ENCODE measurements at regions of chr2 and their contacts with region 1.

Region 1: GRCh38 chr2:16608661-16609643 is 56.7 kb downstream of the CYRIA start:
- DNase-seq: peak; percentile 86 to 88
- ATAC-seq: peak; percentile 96
- H3K4me3 ChIP-seq: peak overlapping the region; percentile 33
- H3K4me3 Mint-ChIP-seq: peak overlapping the region; percentile 89
- H3K27ac ChIP-seq: no peak overlapping the region
- H3K27ac Mint-ChIP-seq: peak overlapping the region; percentile 3 to 63
- H3K4me1 ChIP-seq: peaks cover 5% of the 10 kb centered on the region
- H3K4me1 Mint-ChIP-seq: peaks cover 32 to 51% of the 10 kb centered on the region in 2 donors
- H3K27me3 ChIP-seq: no peaks in the 10 kb centered on the region
- H3K27me3 Mint-ChIP-seq: no peaks in the 10 kb centered on the region
- CTCF ChIP-seq: peak; percentile 96

Region 2: GRCh38 chr2:15939854-15940660 is 668.9 kb before region 1 on chr2 and contains the start of gene MYCN:
- intact Hi-C with region 1: loop called (anchors 2 kb)
- DNase-seq: peak in 1 of 2 donors; percentile 65
- ATAC-seq: peak in 1 of 3 donors; percentile 18
- H3K4me3 ChIP-seq: no peak within 1 kb of the TSS
- H3K4me3 Mint-ChIP-seq: peak within 1 kb of the TSS; percentile 68
- H3K27ac ChIP-seq: no peak within 1 kb of the TSS
- H3K27ac Mint-ChIP-seq: no peak within 1 kb of the TSS
- H3K4me1 ChIP-seq: peaks cover 32% of the 10 kb centered on the region
- H3K4me1 Mint-ChIP-seq: peaks cover 7% of the 10 kb centered on the region in 2 donors
- H3K27me3 ChIP-seq: peaks cover 33% of the 10 kb centered on the region
- H3K27me3 Mint-ChIP-seq: peaks cover 49 to 62% of the 10 kb centered on the region in 2 donors
- CTCF ChIP-seq: no peak
- total RNA-seq, gene MYCN: 0.18 TPM in 1 of 3 donors, not detected in the others

Region 3: GRCh38 chr2:16487686-16488085 is 121.3 kb before region 1 on chr2:
- intact Hi-C with region 1: no loop called
- DNase-seq: no peak
- ATAC-seq: no peak
- H3K4me3 ChIP-seq: no peak overlapping the region
- H3K4me3 Mint-ChIP-seq: no peak overlapping the region
- H3K27ac ChIP-seq: no peak overlapping the region
- H3K27ac Mint-ChIP-seq: no peak overlapping the region
- H3K4me1 ChIP-seq: no peaks in the 10 kb centered on the region
- H3K4me1 Mint-ChIP-seq: no peaks in the 10 kb centered on the region
- H3K27me3 ChIP-seq: no peaks in the 10 kb centered on the region
- H3K27me3 Mint-ChIP-seq: peaks cover 10 to 20% of the 10 kb centered on the region in 2 donors
- CTCF ChIP-seq: no peak

Region 4: DNA sequence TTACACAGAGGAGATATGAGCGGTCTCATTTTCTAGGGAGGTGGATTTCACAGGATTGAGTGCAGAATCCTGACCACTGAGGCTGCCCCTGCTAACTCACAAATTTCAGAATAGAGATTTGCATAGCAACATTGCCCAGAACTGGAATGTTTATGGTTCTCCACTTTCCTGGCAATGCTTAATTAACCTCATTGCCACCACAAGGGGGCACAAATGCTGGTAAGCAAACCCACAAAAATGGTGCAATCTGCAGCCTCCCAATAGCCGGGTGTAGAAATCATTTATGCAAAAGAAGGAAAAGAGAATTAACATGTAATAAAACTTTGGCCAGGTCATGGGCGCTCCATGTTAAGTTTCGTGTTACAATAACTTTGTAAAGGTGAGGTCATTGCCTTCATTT is 55.7 kb before region 1 on chr2:
- intact Hi-C with region 1: loop called (anchors 1 kb)
- DNase-seq: peak in 1 of 2 donors; percentile 54
- ATAC-seq: no peak
- H3K4me3 ChIP-seq: no peak overlapping the region
- H3K4me3 Mint-ChIP-seq: peak overlapping the region; percentile 5
- H3K27ac ChIP-seq: no peak overlapping the region
- H3K27ac Mint-ChIP-seq: no peak overlapping the region
- H3K4me1 ChIP-seq: no peaks in the 10 kb centered on the region
- H3K4me1 Mint-ChIP-seq: no peaks in the 10 kb centered on the region
- H3K27me3 ChIP-seq: no peaks in the 10 kb centered on the region
- H3K27me3 Mint-ChIP-seq: no peaks in the 10 kb centered on the region
- CTCF ChIP-seq: peak; percentile 77

Region 5: GRCh38 chr2:16625201-16625729 is 16.3 kb after region 1 on chr2:
- intact Hi-C with region 1: loop called (anchors 2 kb)
- DNase-seq: peak in 1 of 2 donors; percentile 16
- ATAC-seq: peak; percentile 24 to 61 (median 25)
- H3K4me3 ChIP-seq: no peak overlapping the region
- H3K4me3 Mint-ChIP-seq: peak overlapping the region; percentile 77
- H3K27ac ChIP-seq: peak overlapping the region; percentile 61
- H3K27ac Mint-ChIP-seq: peak overlapping the region; percentile 78 to 80
- H3K4me1 ChIP-seq: peaks cover 76% of the 10 kb centered on the region
- H3K4me1 Mint-ChIP-seq: peaks cover 96% of the 10 kb centered on the region in 2 donors
- H3K27me3 ChIP-seq: no peaks in the 10 kb centered on the region
- H3K27me3 Mint-ChIP-seq: no peaks in the 10 kb centered on the region
- CTCF ChIP-seq: no peak

Measured in natural killer cell (primary cell).